Natural killer cell (primary cell): ENCODE measurements at regions of chr2 and their contacts with region 1.

Region 1: DNA sequence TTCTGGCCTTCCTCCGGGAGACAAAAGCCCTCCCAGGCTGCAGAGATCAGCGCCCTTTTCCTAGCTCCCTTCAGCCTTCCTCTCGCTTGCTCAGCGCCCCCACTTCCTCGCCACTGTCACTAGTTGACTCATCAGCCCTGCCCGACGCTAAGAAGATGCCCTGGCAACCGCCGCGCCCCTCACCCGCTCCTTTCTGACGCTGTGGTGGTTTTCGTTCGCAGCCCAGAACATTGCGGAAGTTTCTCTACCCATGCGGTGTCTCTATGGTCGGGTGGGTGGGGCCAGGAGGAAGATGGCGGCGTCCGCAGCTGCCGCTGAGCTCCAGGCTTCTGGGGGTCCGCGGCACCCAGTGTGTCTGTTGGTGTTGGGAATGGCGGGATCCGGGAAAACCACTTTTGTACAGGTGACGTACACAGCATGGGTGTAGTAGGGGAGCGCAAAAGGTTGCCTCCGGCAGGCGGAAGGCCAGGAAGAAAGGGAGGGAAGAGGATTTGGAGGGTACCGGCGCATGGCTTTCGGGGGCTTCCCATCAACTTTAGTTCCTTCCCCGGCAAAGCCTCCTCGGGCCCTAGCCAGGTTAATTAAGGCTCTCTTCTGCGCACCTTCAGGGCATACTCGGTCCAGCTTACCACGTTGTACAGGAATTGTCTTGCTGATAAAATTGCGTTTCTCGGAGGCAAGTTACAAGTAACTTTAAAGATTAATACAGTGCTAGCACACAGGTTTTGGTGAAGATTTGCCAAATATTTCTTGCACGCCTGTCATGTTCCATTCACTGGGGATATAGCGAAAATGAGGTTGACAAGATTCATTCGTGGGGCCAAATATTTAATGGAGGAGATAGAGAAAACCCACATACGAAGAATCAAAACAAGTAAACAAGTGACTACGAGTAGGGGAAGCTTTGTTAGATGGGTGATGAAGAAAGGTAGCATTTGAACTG is at the starts of genes CCDC121 and GPN1:
- DNase-seq: peak; percentile 92 to 97
- ATAC-seq: peak; percentile 96 to 100 (median 99)
- H3K4me3 ChIP-seq: peak within 1 kb of the TSS; percentile 69
- H3K4me3 Mint-ChIP-seq: no peak within 1 kb of the TSS
- H3K27ac ChIP-seq: peak within 1 kb of the TSS; percentile 65
- H3K27ac Mint-ChIP-seq: no peak within 1 kb of the TSS
- H3K4me1 ChIP-seq: peaks cover 13% of the 10 kb centered on the region
- H3K4me1 Mint-ChIP-seq: peaks cover 13 to 20% of the 10 kb centered on the region in 2 donors
- H3K27me3 ChIP-seq: no peaks in the 10 kb centered on the region
- H3K27me3 Mint-ChIP-seq: no peaks in the 10 kb centered on the region
- CTCF ChIP-seq: no peak
- total RNA-seq, gene CCDC121: 0.25 to 0.58 (median 0.42) TPM
- total RNA-seq, gene GPN1: 31.5 to 36.1 (median 34.9) TPM

Region 2: GRCh38 chr2:27489498-27490397 is 139.3 kb before region 1 on chr2 and contains the start of gene IFT172:
- intact Hi-C with region 1: loop called (anchors 1 kb)
- DNase-seq: peak; percentile 97 to 100
- ATAC-seq: peak; percentile 95 to 99 (median 96)
- H3K4me3 ChIP-seq: peak within 1 kb of the TSS; percentile 45
- H3K4me3 Mint-ChIP-seq: peak within 1 kb of the TSS; percentile 90
- H3K27ac ChIP-seq: peak within 1 kb of the TSS; percentile 77
- H3K27ac Mint-ChIP-seq: peak within 1 kb of the TSS; percentile 92
- H3K4me1 ChIP-seq: peaks cover 21% of the 10 kb centered on the region
- H3K4me1 Mint-ChIP-seq: peaks cover 14 to 20% of the 10 kb centered on the region in 2 donors
- H3K27me3 ChIP-seq: peaks cover 13% of the 10 kb centered on the region
- H3K27me3 Mint-ChIP-seq: peaks cover 12 to 21% of the 10 kb centered on the region in 2 donors
- CTCF ChIP-seq: no peak
- total RNA-seq, gene IFT172: 24.8 to 35.7 (median 30.7) TPM

Region 3: GRCh38 chr2:27573452-27573851 is 55.6 kb before region 1 on chr2:
- intact Hi-C with region 1: loop called (anchors 2 kb)
- DNase-seq: no peak
- ATAC-seq: no peak
- H3K4me3 ChIP-seq: no peak overlapping the region
- H3K4me3 Mint-ChIP-seq: no peak overlapping the region
- H3K27ac ChIP-seq: no peak overlapping the region
- H3K27ac Mint-ChIP-seq: peak overlapping the region; percentile 63 to 69
- H3K4me1 ChIP-seq: peaks cover 33% of the 10 kb centered on the region
- H3K4me1 Mint-ChIP-seq: peaks cover 42 to 58% of the 10 kb centered on the region in 2 donors
- H3K27me3 ChIP-seq: peaks cover 23% of the 10 kb centered on the region
- H3K27me3 Mint-ChIP-seq: peaks cover 17 to 33% of the 10 kb centered on the region in 2 donors
- CTCF ChIP-seq: no peak

Region 4: GRCh38 chr2:27582695-27583389 is 46.2 kb before region 1 on chr2 and contains the start of gene ZNF512:
- intact Hi-C with region 1: loop called (anchors 2 kb)
- DNase-seq: peak; percentile 66 to 86
- ATAC-seq: peak; percentile 88 to 92 (median 92)
- H3K4me3 ChIP-seq: peak within 1 kb of the TSS; percentile 66
- H3K4me3 Mint-ChIP-seq: peak within 1 kb of the TSS; percentile 96
- H3K27ac ChIP-seq: peak within 1 kb of the TSS; percentile 61
- H3K27ac Mint-ChIP-seq: peak within 1 kb of the TSS; percentile 83 to 95
- H3K4me1 ChIP-seq: peaks cover 28% of the 10 kb centered on the region
- H3K4me1 Mint-ChIP-seq: peaks cover 43 to 51% of the 10 kb centered on the region in 2 donors
- H3K27me3 ChIP-seq: peaks cover 3% of the 10 kb centered on the region
- H3K27me3 Mint-ChIP-seq: peaks cover 18 to 31% of the 10 kb centered on the region in 2 donors
- CTCF ChIP-seq: no peak
- total RNA-seq, gene ZNF512: 26.5 to 40.9 (median 30.6) TPM

Region 5: GRCh38 chr2:27606611-27607010 is 22.4 kb before region 1 on chr2:
- intact Hi-C with region 1: no loop called
- DNase-seq: no peak
- ATAC-seq: no peak
- H3K4me3 ChIP-seq: no peak overlapping the region
- H3K4me3 Mint-ChIP-seq: no peak overlapping the region
- H3K27ac ChIP-seq: no peak overlapping the region
- H3K27ac Mint-ChIP-seq: peak overlapping the region in 1 of 2 donors; percentile 18
- H3K4me1 ChIP-seq: no peaks in the 10 kb centered on the region
- H3K4me1 Mint-ChIP-seq: peaks cover 0 to 12% of the 10 kb centered on the region in 2 donors
- H3K27me3 ChIP-seq: no peaks in the 10 kb centered on the region
- H3K27me3 Mint-ChIP-seq: no peaks in the 10 kb centered on the region
- CTCF ChIP-seq: no peak

Region 6: GRCh38 chr2:27663463-27664249 is 34.6 kb after region 1 on chr2 and contains the starts of genes SLC4A1AP and SUPT7L:
- intact Hi-C with region 1: loop called (anchors 5 kb)
- DNase-seq: peak; percentile 78 to 90
- ATAC-seq: peak; percentile 74 to 86 (median 78)
- H3K4me3 ChIP-seq: peak within 1 kb of the TSS; percentile 94
- H3K4me3 Mint-ChIP-seq: peak within 1 kb of the TSS; percentile 99
- H3K27ac ChIP-seq: peak within 1 kb of the TSS; percentile 99
- H3K27ac Mint-ChIP-seq: peak within 1 kb of the TSS; percentile 99
- H3K4me1 ChIP-seq: peaks cover 22% of the 10 kb centered on the region
- H3K4me1 Mint-ChIP-seq: peaks cover 37 to 49% of the 10 kb centered on the region in 2 donors
- H3K27me3 ChIP-seq: no peaks in the 10 kb centered on the region
- H3K27me3 Mint-ChIP-seq: no peaks in the 10 kb centered on the region
- CTCF ChIP-seq: no peak
- total RNA-seq, gene SLC4A1AP: 22.0 to 26.0 (median 24.8) TPM
- total RNA-seq, gene SUPT7L: 52.2 to 53.7 (median 52.8) TPM

Region 7: GRCh38 chr2:27860111-27860510 is 231.1 kb after region 1 on chr2:
- intact Hi-C with region 1: no loop called
- DNase-seq: no peak
- ATAC-seq: no peak
- H3K4me3 ChIP-seq: no peak overlapping the region
- H3K4me3 Mint-ChIP-seq: no peak overlapping the region
- H3K27ac ChIP-seq: no peak overlapping the region
- H3K27ac Mint-ChIP-seq: no peak overlapping the region
- H3K4me1 ChIP-seq: no peaks in the 10 kb centered on the region
- H3K4me1 Mint-ChIP-seq: peaks cover 5 to 7% of the 10 kb centered on the region in 2 donors
- H3K27me3 ChIP-seq: no peaks in the 10 kb centered on the region
- H3K27me3 Mint-ChIP-seq: peaks cover 0 to 3% of the 10 kb centered on the region in 2 donors
- CTCF ChIP-seq: no peak